Cardiac septum (tissue), 1 donor: ENCODE measurements at regions of chr1 and their contacts with region 1.

Region 1: GRCh38 chr1:225766967-225767633 is 10.5 kb upstream of the SRP9 start:
- DNase-seq: no peak

Region 2: GRCh38 chr1:225695578-225696337 is 71.3 kb before region 1 on chr1:
- intact Hi-C with region 1: loop called (anchors 5 kb)
- DNase-seq: no peak

Region 3: GRCh38 chr1:225754940-225755641 is 12.0 kb before region 1 on chr1:
- intact Hi-C with region 1: loop called (anchors 1 kb)
- DNase-seq: no peak